Thyroid gland (tissue), 4 donors: ENCODE measurements at regions of chr6 and their contacts with region 1.

Region 1: GRCh38 chr6:137707590-137708360 is 159.3 kb upstream of the TNFAIP3 start:
- DNase-seq: peak; percentile 61 to 63
- H3K4me3 ChIP-seq: no peak overlapping the region
- H3K27ac ChIP-seq: no peak overlapping the region
- H3K4me1 ChIP-seq: peaks cover 0 to 14% of the 10 kb centered on the region in 2 donors
- H3K27me3 ChIP-seq: no peaks in the 10 kb centered on the region
- CTCF ChIP-seq: peak; percentile 27 to 88 (median 68)
- POLR2A ChIP-seq: no peak

Region 2: DNA sequence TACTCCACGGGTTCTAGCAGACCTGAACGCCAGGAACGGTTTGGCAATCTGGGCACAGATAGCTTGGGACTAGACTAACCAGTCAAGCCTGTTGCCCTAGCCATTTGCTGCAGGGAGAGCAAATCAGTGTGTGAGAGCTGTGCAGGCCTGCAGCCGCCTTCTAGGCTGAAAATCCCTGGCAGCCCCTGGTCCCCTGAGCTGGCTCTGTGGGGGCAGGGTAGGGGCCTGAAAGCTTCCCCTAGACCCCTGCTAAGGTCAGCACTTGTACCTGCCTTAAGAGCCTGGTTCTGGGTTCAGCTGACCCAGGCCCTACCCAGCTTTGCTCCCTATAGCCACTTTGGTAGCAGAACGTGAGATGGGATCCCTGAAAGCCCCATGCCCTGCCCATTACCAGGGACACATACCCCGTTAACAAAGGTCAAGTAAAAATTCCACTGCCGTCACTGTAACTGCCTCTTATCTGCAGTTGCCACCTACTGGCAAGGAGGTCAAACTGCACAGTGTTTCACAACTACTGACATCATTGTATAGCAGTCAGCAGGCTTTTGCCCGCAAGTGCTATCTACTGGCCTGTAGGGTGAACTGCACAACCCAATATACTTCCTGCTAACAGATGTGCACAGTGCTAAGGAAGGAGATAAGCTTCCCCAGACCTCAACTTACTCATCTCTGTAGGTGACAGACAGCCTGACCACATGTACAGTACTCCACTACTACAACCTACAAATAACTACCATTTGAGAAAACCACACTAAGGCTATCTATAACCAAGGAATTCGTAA is 118.5 kb before region 1 on chr6:
- intact Hi-C with region 1: no loop called
- DNase-seq: peak; percentile 6 to 8
- H3K4me3 ChIP-seq: no peak overlapping the region
- H3K27ac ChIP-seq: no peak overlapping the region
- H3K4me1 ChIP-seq: no peaks in the 10 kb centered on the region
- H3K27me3 ChIP-seq: no peaks in the 10 kb centered on the region
- CTCF ChIP-seq: peak in 2 of 6 experiments; percentile 36
- POLR2A ChIP-seq: no peak

Region 3: GRCh38 chr6:137866914-137867684 is 159.3 kb after region 1 on chr6 and contains the start of gene TNFAIP3:
- intact Hi-C with region 1: loop called (anchors 2 kb)
- DNase-seq: peak; percentile 94 to 95
- H3K4me3 ChIP-seq: peak within 1 kb of the TSS; percentile 33 to 78 (median 72)
- H3K27ac ChIP-seq: peak within 1 kb of the TSS; percentile 74 to 85 (median 82)
- H3K4me1 ChIP-seq: peaks cover 12 to 27% of the 10 kb centered on the region in 2 donors
- H3K27me3 ChIP-seq: no peaks in the 10 kb centered on the region
- CTCF ChIP-seq: peak in 5 of 6 experiments; percentile 44 to 97 (median 83)
- POLR2A ChIP-seq: peak; percentile 42 to 91
- total RNA-seq, gene TNFAIP3: 5.9 to 7.8 (median 7.3) TPM

Region 4: GRCh38 chr6:138109042-138109997 is 401.5 kb after region 1 on chr6:
- intact Hi-C with region 1: loop called (anchors 5 kb)
- DNase-seq: peak; percentile 63 to 64
- H3K4me3 ChIP-seq: no peak overlapping the region
- H3K27ac ChIP-seq: no peak overlapping the region
- H3K4me1 ChIP-seq: peaks cover 0 to 10% of the 10 kb centered on the region in 2 donors
- H3K27me3 ChIP-seq: no peaks in the 10 kb centered on the region
- CTCF ChIP-seq: peak; percentile 68 to 95 (median 90)
- POLR2A ChIP-seq: no peak

Region 5: DNA sequence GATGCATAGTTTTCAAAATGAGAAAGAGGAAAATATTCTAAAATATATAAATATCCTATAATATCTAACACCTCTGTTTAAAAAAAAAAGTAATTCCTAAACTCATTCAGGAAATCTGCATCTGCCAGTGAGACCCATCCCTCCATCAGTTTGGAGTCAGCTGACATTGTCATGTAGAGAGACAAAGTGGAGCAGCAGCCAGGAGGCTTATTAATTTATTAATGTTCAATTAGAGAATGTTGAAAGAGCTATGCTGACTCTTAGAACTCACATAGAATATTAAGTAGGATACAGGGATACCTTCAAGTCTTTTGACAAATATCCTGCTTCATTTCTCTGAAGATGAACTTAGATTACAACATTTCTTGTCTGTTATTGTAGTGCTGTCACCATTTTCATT is 412.2 kb after region 1 on chr6:
- intact Hi-C with region 1: no loop called
- DNase-seq: no peak
- H3K4me3 ChIP-seq: no peak overlapping the region
- H3K27ac ChIP-seq: no peak overlapping the region
- H3K4me1 ChIP-seq: no peaks in the 10 kb centered on the region
- H3K27me3 ChIP-seq: no peaks in the 10 kb centered on the region
- CTCF ChIP-seq: no peak
- POLR2A ChIP-seq: no peak